ENCODE measurements at regions of chr9 and their contacts with region 1.

Region 1: DNA sequence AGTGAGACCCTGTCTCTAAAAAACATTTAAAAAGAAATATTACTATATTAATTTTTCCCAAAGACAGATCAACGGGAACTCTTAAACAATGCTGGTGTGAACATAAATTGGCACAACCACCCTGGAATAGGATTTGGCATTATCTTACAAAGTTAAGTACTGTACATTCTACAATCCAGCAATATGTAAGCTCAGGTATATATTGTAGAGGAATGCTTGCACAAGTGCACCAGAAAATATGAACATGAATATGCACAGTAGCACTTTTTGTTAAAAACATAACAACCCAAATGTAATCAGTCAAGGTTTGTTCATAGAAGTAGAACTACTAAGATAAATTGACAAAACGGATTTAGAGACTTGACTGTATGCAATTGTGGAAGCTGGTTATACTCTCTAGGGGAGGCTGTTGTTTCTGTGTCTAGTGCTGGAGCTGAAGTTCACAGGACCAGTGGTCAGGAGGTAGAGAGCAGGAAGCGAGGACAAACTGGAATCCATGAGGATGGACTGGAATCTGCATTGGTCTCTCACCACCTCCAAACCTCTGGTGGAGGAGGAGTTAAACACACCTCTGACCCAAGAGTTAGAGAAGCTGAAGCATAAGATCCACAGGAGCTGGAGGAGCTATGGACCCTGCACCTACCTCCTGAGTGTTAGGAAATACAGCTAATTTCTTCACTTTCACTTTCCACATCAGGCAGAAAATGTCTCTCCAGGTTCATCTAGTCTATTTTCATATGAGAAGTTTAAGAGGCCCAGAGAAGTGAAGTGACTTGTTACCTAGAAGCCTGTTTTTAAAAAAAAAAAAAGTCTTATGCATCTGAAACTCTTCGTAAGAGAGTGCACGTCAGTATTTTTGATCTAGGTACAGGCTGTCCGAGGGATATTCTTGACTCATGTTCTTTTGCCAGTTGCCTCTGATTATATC is 20.3 kb upstream of the RIC1 start:
- DNase-seq: no peak
- H3K4me3 Mint-ChIP-seq: peak overlapping the region; percentile 54
- H3K27ac Mint-ChIP-seq: peak overlapping the region; percentile 9
- H3K4me1 Mint-ChIP-seq: peaks cover 18% of the 10 kb centered on the region
- H3K27me3 Mint-ChIP-seq: no peaks in the 10 kb centered on the region

Region 2: GRCh38 chr9:5301544-5301943 is 307.0 kb before region 1 on chr9:
- intact Hi-C with region 1: loop called (anchors 10 kb)
- DNase-seq: no peak
- H3K4me3 Mint-ChIP-seq: no peak overlapping the region
- H3K27ac Mint-ChIP-seq: no peak overlapping the region
- H3K4me1 Mint-ChIP-seq: peaks cover 14% of the 10 kb centered on the region
- H3K27me3 Mint-ChIP-seq: no peaks in the 10 kb centered on the region

Region 3: DNA sequence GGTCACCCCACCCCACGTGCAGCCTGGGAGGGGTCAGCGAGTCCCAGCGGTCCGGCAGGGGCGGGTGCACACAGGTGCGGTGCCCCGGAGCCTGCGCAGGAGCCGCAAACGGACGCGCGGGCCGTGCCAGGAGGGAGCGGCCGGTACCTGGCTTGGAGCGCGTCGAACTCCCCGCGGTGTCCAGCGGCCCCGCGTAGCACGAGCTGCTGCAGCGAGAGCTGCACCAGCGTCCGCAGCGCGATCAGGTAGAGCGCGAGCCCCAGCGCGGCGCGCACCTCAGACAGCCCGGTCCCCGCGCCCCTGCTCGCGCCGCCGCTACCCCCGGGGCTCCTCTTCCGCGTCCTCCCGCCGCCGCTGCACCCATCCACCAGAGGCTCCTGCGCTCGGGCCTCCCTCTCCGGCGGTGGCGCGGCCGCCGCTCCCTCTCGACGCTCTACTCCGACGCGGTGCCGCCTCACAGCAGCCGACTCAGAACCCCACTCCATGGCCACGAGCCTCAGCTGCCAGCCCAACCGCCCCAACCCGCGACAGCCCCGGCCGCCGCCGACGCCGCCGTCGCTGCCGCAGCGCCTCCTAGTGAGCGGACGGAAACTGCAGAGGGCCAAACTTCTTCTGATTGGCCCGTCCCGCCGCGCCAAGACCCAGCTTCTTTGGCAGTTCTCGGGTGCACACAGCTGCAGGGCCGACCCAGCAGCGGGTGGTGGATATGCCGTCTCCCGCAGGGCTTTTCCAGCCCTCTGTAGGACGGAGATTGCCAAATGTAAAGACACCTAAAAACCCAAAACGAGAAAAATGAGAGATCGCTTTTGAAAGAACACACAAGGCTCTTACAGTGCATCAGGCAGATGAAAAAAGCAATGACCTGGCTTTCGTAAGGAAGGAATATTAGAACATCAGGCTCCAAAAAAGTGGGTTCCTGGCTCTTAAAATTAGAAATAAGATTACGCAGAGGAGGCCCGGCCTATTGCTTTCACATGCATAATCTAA is 224.3 kb after region 1 on chr9 and contains the start of gene ERMP1:
- intact Hi-C with region 1: no loop called
- DNase-seq: peak; percentile 89
- H3K4me3 Mint-ChIP-seq: peak within 1 kb of the TSS; percentile 92
- H3K27ac Mint-ChIP-seq: peak within 1 kb of the TSS; percentile 82
- H3K4me1 Mint-ChIP-seq: peaks cover 62% of the 10 kb centered on the region
- H3K27me3 Mint-ChIP-seq: no peaks in the 10 kb centered on the region
- total RNA-seq, gene ERMP1: 23.1 and 24.1 TPM in 2 replicates

Measured in activated T-helper 1 cell treated with anti-CD3 and anti-CD28 coated beads, Interleukin-12 subunit alpha, Interleukin-12 subunit beta, Interleukin-2, Interleukin-4 antibody, amounts not matched to agents 30 ng/mL and 10 ng/mL and 1 ng/mL, durations not matched to agents 14 hours and 24 hours and 36 hours (primary cell).